HepG2 (cell line): ENCODE measurements at regions of chr1 and their contacts with region 1.

Region 1: DNA sequence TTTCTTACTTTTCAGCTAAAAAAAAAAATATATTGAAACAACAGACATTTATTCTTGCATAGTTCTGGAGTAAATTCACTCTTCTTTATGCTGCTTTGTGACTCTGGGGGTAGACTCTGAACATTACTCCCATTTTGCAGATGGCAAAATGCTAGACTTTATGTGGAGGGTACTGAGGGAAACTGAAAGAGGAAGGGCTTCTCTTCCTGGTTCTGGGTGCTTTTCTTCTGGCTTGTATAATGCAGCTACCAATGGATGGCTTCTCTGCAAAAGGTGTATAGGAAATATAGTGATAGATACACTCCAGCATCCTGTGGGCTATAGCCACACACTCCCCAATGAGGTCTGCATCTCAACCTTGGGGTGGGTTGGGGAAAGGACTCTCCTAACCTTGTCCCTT is 19.7 kb upstream of the ZBTB40 start:
- DNase-seq: no peak
- ATAC-seq: no peak
- H3K4me3 ChIP-seq: no peak overlapping the region
- H3K27ac ChIP-seq: no peak overlapping the region
- H3K4me1 ChIP-seq: no peaks in the 10 kb centered on the region
- H3K27me3 ChIP-seq: no peaks in the 10 kb centered on the region
- CTCF ChIP-seq: no peak
- EP300 ChIP-seq: no peak
- POLR2A ChIP-seq: no peak
- RAD21 ChIP-seq: no peak

Region 2: GRCh38 chr1:22451702-22452474 is 19.9 kb after region 1 on chr1 and contains the start of gene ZBTB40:
- CTCF ChIA-PET with region 1: no interaction called
- POLR2A ChIA-PET with region 1: no interaction called
- in situ Hi-C with region 1: no loop called
- intact Hi-C with region 1: loop called (anchors 2 kb)
- DNase-seq: peak; percentile 94
- ATAC-seq: peak; percentile 84
- H3K4me3 ChIP-seq: peak within 1 kb of the TSS; percentile 88 to 96 (median 95)
- H3K27ac ChIP-seq: peak within 1 kb of the TSS; percentile 85
- H3K4me1 ChIP-seq: peaks cover 83% of the 10 kb centered on the region
- H3K27me3 ChIP-seq: no peaks in the 10 kb centered on the region; a peak in 1 of 5 replicates
- CTCF ChIP-seq: 0 out of 2 replicates have a peak, but pooled peaks have one; percentile 4
- EP300 ChIP-seq: peak; percentile 54 to 70; a peak in 3 of 4 replicates
- POLR2A ChIP-seq: peak; percentile 47 to 62
- RAD21 ChIP-seq: peak; percentile 11; the same call in 1 of the 2 replicates
- total RNA-seq, gene ZBTB40: 14.7 and 16.5 TPM in 2 replicates

Region 3: GRCh38 chr1:22473952-22474351 is 42.0 kb after region 1 on chr1:
- CTCF ChIA-PET with region 1: no interaction called
- POLR2A ChIA-PET with region 1: no interaction called
- in situ Hi-C with region 1: no loop called
- intact Hi-C with region 1: loop called (anchors 1 kb)
- DNase-seq: no peak
- ATAC-seq: no peak
- H3K4me3 ChIP-seq: no peak overlapping the region
- H3K27ac ChIP-seq: no peak overlapping the region
- H3K4me1 ChIP-seq: peaks cover 24% of the 10 kb centered on the region
- H3K27me3 ChIP-seq: no peaks in the 10 kb centered on the region
- CTCF ChIP-seq: no peak
- EP300 ChIP-seq: no peak
- POLR2A ChIP-seq: no peak
- RAD21 ChIP-seq: no peak

Region 4: DNA sequence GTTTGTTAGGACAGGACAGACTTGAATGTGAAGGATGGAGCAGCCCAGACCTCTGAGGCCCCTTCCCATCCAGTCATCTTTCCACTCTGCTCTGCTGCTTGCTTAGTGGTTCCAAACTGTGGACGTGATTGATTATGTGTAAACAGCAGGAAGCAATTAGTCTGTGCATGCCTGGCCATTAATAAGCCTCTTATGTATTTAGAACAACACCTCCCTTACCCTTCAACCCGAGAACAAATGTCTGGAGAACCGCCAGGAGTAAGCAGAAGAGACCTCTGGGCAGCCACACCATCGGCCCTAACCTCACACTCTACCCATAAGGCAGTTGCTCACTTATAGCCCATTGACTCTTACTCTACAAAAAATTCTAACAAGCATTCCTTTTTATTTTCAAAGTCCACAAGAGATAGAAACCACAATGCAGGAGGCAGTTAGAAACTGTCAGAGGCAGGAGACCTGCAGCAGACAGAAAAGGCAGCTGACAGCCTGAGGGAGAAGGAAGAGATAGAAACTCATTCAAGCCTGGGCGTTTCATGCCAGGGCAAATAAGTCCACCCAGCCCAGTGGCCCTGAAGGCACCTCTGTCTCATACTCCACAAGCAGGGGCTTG is 125.5 kb after region 1 on chr1:
- CTCF ChIA-PET with region 1: no interaction called
- POLR2A ChIA-PET with region 1: no interaction called
- in situ Hi-C with region 1: no loop called
- intact Hi-C with region 1: no loop called
- DNase-seq: no peak
- ATAC-seq: no peak
- H3K4me3 ChIP-seq: no peak overlapping the region
- H3K27ac ChIP-seq: no peak overlapping the region
- H3K4me1 ChIP-seq: peaks cover 6% of the 10 kb centered on the region; the same call in 1 of the 2 replicates
- H3K27me3 ChIP-seq: peaks cover 20 to 85% of the 10 kb centered on the region in 2 experiments
- CTCF ChIP-seq: no peak
- EP300 ChIP-seq: no peak
- POLR2A ChIP-seq: no peak
- RAD21 ChIP-seq: no peak